PC-3 (cell line): ENCODE measurements at regions of chr10 and their contacts with region 1.

Region 1: GRCh38 chr10:94225589-94225988 is 137.2 kb downstream of the NOC3L start:
- DNase-seq: peak; percentile 3
- ATAC-seq: no peak
- H3K4me3 ChIP-seq: no peak overlapping the region
- H3K27ac ChIP-seq: no peak overlapping the region
- H3K4me1 ChIP-seq: peaks cover 14% of the 10 kb centered on the region; the same call in 1 of the 2 replicates
- H3K27me3 ChIP-seq: no peaks in the 10 kb centered on the region
- CTCF ChIP-seq: peak; percentile 43

Region 2: GRCh38 chr10:94076321-94076841 is 149.2 kb before region 1 on chr10:
- CTCF ChIA-PET with region 1: no interaction called
- POLR2A ChIA-PET with region 1: no interaction called
- intact Hi-C with region 1: loop called (anchors 10 kb)
- DNase-seq: peak; percentile 33
- ATAC-seq: peak; percentile 53
- H3K4me3 ChIP-seq: no peak overlapping the region
- H3K27ac ChIP-seq: no peak overlapping the region
- H3K4me1 ChIP-seq: no peaks in the 10 kb centered on the region
- H3K27me3 ChIP-seq: no peaks in the 10 kb centered on the region
- CTCF ChIP-seq: peak; percentile 49; the same call in 1 of the 2 replicates

Region 3: GRCh38 chr10:94183666-94184264 is 41.8 kb before region 1 on chr10:
- CTCF ChIA-PET with region 1: no interaction called
- POLR2A ChIA-PET with region 1: no interaction called
- intact Hi-C with region 1: no loop called
- DNase-seq: peak; percentile 88
- ATAC-seq: peak; percentile 98
- H3K4me3 ChIP-seq: no peak overlapping the region
- H3K27ac ChIP-seq: peak overlapping the region; percentile 73
- H3K4me1 ChIP-seq: peaks cover 17% of the 10 kb centered on the region
- H3K27me3 ChIP-seq: no peaks in the 10 kb centered on the region
- CTCF ChIP-seq: no peak